Activated CD4-positive, alpha-beta memory T cell treated with anti-CD3 and anti-CD28 coated beads for 36 hours (primary cell): ENCODE measurements at regions of chr4 and their contacts with region 1.

Region 1: GRCh38 chr4:153318696-153319320 is 25.7 kb upstream of the MND1 start:
- DNase-seq: peak; percentile 19
- H3K4me3 Mint-ChIP-seq: no peak overlapping the region
- H3K27ac Mint-ChIP-seq: no peak overlapping the region
- H3K4me1 Mint-ChIP-seq: no peaks in the 10 kb centered on the region
- H3K27me3 Mint-ChIP-seq: no peaks in the 10 kb centered on the region

Region 2: GRCh38 chr4:152843481-152844090 is 475.2 kb before region 1 on chr4:
- CTCF ChIA-PET with region 1: no interaction called
- POLR2A ChIA-PET with region 1: no interaction called
- intact Hi-C with region 1: loop called (anchors 10 kb)
- DNase-seq: no peak
- H3K4me3 Mint-ChIP-seq: no peak overlapping the region
- H3K27ac Mint-ChIP-seq: no peak overlapping the region
- H3K4me1 Mint-ChIP-seq: peaks cover 16% of the 10 kb centered on the region
- H3K27me3 Mint-ChIP-seq: no peaks in the 10 kb centered on the region

Region 3: DNA sequence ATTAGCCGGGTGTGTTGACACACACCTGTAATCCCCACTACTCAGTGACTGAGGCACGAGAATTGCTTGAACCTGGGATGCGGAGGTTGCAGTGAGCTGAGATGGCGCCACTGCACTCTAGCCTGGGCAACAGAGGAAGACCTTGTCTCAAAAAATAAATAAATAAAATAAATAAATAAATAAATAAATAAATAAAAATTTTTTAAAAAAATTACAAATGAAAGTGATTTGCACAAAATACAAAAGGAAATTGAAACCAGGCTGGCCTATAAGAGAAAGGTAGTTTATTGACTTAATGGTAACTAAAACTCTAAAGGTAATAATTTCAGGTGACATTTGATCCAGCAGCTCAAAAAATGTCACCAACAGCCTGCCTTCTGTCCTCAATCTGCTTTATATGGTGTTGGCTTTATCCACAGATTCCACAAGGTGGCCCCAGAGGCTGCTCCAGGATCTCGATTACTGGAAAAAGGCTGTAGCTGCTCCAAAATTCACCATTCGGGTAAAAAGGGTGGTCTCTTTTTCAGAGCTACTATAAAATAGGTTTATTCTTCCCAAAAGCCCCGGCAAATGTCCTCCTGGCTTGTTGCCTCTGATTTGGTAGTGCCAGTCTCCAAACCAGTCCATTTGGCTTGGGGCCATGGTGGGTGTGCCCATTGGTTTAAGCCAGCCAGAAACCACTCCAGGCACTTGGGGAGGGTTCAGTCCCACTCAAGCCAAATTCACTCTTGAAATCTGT is 175.9 kb before region 1 on chr4:
- CTCF ChIA-PET with region 1: interaction called, 31 read pairs
- POLR2A ChIA-PET with region 1: no interaction called
- intact Hi-C with region 1: loop called (anchors 1 kb)
- DNase-seq: peak; percentile 75
- H3K4me3 Mint-ChIP-seq: no peak overlapping the region
- H3K27ac Mint-ChIP-seq: no peak overlapping the region
- H3K4me1 Mint-ChIP-seq: peaks cover 10% of the 10 kb centered on the region
- H3K27me3 Mint-ChIP-seq: no peaks in the 10 kb centered on the region

Region 4: GRCh38 chr4:153232768-153233167 is 86.0 kb before region 1 on chr4:
- CTCF ChIA-PET with region 1: interaction called, 3 read pairs
- POLR2A ChIA-PET with region 1: no interaction called
- intact Hi-C with region 1: loop called (anchors 1 kb)
- DNase-seq: peak; percentile 35
- H3K4me3 Mint-ChIP-seq: no peak overlapping the region
- H3K27ac Mint-ChIP-seq: no peak overlapping the region
- H3K4me1 Mint-ChIP-seq: peaks cover 34% of the 10 kb centered on the region
- H3K27me3 Mint-ChIP-seq: peaks cover 1% of the 10 kb centered on the region

Region 5: GRCh38 chr4:153249199-153250041 is 69.4 kb before region 1 on chr4:
- CTCF ChIA-PET with region 1: no interaction called
- POLR2A ChIA-PET with region 1: no interaction called
- intact Hi-C with region 1: loop called (anchors 1 kb)
- DNase-seq: peak; percentile 91
- H3K4me3 Mint-ChIP-seq: peak overlapping the region; percentile 81
- H3K27ac Mint-ChIP-seq: peak overlapping the region; percentile 82
- H3K4me1 Mint-ChIP-seq: peaks cover 16% of the 10 kb centered on the region
- H3K27me3 Mint-ChIP-seq: no peaks in the 10 kb centered on the region

Region 6: GRCh38 chr4:153535772-153536513 is 217.1 kb after region 1 on chr4:
- CTCF ChIA-PET with region 1: no interaction called
- POLR2A ChIA-PET with region 1: no interaction called
- intact Hi-C with region 1: no loop called
- DNase-seq: no peak
- H3K4me3 Mint-ChIP-seq: peak overlapping the region; percentile 8
- H3K27ac Mint-ChIP-seq: peak overlapping the region; percentile 36
- H3K4me1 Mint-ChIP-seq: peaks cover 73% of the 10 kb centered on the region
- H3K27me3 Mint-ChIP-seq: no peaks in the 10 kb centered on the region